ENCODE measurements at regions of chr10 and their contacts with region 1.

Region 1: GRCh38 chr10:99484603-99485581 is 47.9 kb upstream of the NKX2-3 start:
- DNase-seq: peak in 1 of 2 experiments; percentile 68
- H3K4me3 ChIP-seq: no peak overlapping the region
- H3K27ac ChIP-seq: no peak overlapping the region
- H3K4me1 ChIP-seq: no peaks in the 10 kb centered on the region
- H3K27me3 ChIP-seq: peaks cover 0 to 5% (median 0%) of the 10 kb centered on the region in 4 experiments; a peak in 2 of 7 replicates
- CTCF ChIP-seq: peak; percentile 47 to 69 (median 53); a peak in 3 of 4 replicates
- EP300 ChIP-seq: no peak
- POLR2A ChIP-seq: no peak
- RAD21 ChIP-seq: peak; percentile 65 to 71

Region 2: GRCh38 chr10:99435986-99436638 is 48.8 kb before region 1 on chr10:
- CTCF ChIA-PET with region 1: interaction called, 26 read pairs
- POLR2A ChIA-PET with region 1: no interaction called
- DNase-seq: no peak
- H3K4me3 ChIP-seq: no peak overlapping the region
- H3K27ac ChIP-seq: no peak overlapping the region
- H3K4me1 ChIP-seq: no peaks in the 10 kb centered on the region
- H3K27me3 ChIP-seq: no peaks in the 10 kb centered on the region
- CTCF ChIP-seq: peak in 2 of 3 experiments; percentile 38 to 40; a peak in 2 of 4 replicates
- EP300 ChIP-seq: no peak
- POLR2A ChIP-seq: no peak
- RAD21 ChIP-seq: peak; percentile 67 to 70

Region 3: DNA sequence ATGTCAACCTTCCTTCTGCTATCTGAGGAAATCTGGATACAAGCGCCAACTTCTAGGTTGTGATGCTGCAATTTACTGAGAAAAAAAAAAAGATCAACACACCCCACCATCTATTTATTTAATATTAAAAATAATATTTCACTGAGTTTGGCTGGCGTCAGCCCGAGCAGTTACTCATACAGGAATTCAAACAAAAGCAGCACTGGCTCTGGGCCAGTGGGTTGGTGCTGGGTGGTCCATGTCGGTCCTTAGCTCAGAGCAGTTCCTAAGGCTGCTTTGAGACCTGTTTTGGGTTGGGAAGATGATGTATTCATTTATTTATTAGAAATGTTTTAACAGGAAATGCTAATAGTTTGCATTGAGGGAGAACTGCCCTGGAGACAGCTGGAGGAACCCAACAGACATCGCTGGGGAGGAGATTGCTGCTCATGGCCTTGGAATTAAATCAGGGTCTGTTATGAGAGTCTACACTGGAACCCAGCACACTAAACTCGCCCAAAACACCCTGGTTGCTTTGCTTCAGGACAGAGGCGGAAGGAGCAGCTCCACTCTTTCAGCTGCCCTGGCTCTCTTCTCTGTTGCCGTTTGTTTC is 18.2 kb before region 1 on chr10:
- CTCF ChIA-PET with region 1: interaction called, 18 read pairs
- POLR2A ChIA-PET with region 1: no interaction called
- DNase-seq: no peak
- H3K4me3 ChIP-seq: no peak overlapping the region
- H3K27ac ChIP-seq: no peak overlapping the region
- H3K4me1 ChIP-seq: no peaks in the 10 kb centered on the region
- H3K27me3 ChIP-seq: no peaks in the 10 kb centered on the region
- CTCF ChIP-seq: no peak
- EP300 ChIP-seq: no peak
- POLR2A ChIP-seq: no peak
- RAD21 ChIP-seq: no peak

Region 4: GRCh38 chr10:99548041-99548530 is 63.2 kb after region 1 on chr10:
- CTCF ChIA-PET with region 1: interaction called, 74 read pairs
- POLR2A ChIA-PET with region 1: no interaction called
- DNase-seq: no peak
- H3K4me3 ChIP-seq: no peak overlapping the region
- H3K27ac ChIP-seq: no peak overlapping the region
- H3K4me1 ChIP-seq: no peaks in the 10 kb centered on the region; a peak in 1 of 7 replicates
- H3K27me3 ChIP-seq: peaks cover 4 to 33% (median 21%) of the 10 kb centered on the region in 4 experiments
- CTCF ChIP-seq: peak; percentile 62 to 82 (median 78)
- EP300 ChIP-seq: no peak
- POLR2A ChIP-seq: no peak
- RAD21 ChIP-seq: peak; percentile 67 to 77

Region 5: GRCh38 chr10:99579616-99580370 is 94.9 kb after region 1 on chr10:
- CTCF ChIA-PET with region 1: interaction called, 10 read pairs
- POLR2A ChIA-PET with region 1: no interaction called
- DNase-seq: no peak
- H3K4me3 ChIP-seq: no peak overlapping the region
- H3K27ac ChIP-seq: no peak overlapping the region
- H3K4me1 ChIP-seq: peaks cover 0 to 3% (median 0%) of the 10 kb centered on the region in 4 experiments; a peak in 1 of 7 replicates
- H3K27me3 ChIP-seq: no peaks in the 10 kb centered on the region; a peak in 3 of 7 replicates
- CTCF ChIP-seq: no peak
- EP300 ChIP-seq: no peak
- POLR2A ChIP-seq: no peak
- RAD21 ChIP-seq: no peak

Region 6: GRCh38 chr10:99612167-99612831 is 127.4 kb after region 1 on chr10:
- CTCF ChIA-PET with region 1: interaction called, 21 read pairs
- POLR2A ChIA-PET with region 1: no interaction called
- DNase-seq: no peak
- H3K4me3 ChIP-seq: no peak overlapping the region
- H3K27ac ChIP-seq: no peak overlapping the region; the same call in 1 of the 2 replicates
- H3K4me1 ChIP-seq: no peaks in the 10 kb centered on the region
- H3K27me3 ChIP-seq: no peaks in the 10 kb centered on the region
- CTCF ChIP-seq: peak in 2 of 3 experiments; percentile 83 to 89; a peak in 3 of 4 replicates
- EP300 ChIP-seq: no peak
- POLR2A ChIP-seq: no peak
- RAD21 ChIP-seq: peak; percentile 95 to 96

Region 7: DNA sequence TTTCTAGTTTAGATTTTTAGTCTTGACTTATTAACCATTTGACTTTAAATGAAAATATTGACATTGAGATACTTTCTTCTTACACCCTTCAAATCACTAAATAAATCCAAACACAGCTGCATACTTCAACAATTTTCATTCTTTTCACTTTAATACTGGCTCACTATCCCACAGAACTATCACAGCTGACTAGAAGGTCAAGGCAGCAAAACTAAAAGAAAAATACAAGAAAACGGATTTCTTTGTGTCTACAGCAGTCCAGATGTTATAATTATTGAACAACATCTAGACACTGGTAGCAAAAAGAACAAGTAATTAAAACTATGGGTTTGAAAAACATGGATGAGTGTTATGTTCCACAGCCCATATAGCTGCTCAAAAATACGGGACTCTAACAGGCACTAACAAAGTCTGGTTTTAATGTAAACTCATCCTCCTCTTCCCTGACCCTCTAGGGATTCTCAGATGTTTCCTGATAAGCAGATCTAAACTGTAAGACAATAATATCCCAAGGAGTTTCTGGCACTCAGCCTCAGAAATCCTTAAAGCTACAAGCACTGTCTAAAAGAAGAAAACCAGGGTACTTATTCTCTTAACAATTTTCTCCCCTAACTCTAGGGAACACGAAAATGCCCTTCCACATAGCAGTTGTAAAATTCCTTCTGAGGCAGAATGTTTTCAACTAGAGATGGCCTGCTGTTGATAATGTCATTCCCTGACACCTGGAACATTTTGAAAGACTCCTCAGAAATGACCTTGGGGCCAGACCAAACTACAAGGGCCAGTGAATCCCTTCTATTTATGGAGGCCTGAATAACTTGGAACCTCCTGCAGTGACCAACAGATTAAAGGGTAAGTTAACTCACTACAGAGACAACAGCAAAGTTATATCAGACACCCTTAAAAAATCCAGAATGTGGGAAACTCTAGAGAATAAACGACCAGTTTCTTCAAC is 512.1 kb after region 1 on chr10:
- CTCF ChIA-PET with region 1: no interaction called
- POLR2A ChIA-PET with region 1: no interaction called
- DNase-seq: no peak
- H3K4me3 ChIP-seq: no peak overlapping the region
- H3K27ac ChIP-seq: no peak overlapping the region
- H3K4me1 ChIP-seq: peaks cover 3 to 5% (median 4%) of the 10 kb centered on the region in 4 experiments; a peak in 4 of 7 replicates
- H3K27me3 ChIP-seq: no peaks in the 10 kb centered on the region
- CTCF ChIP-seq: no peak
- EP300 ChIP-seq: no peak
- POLR2A ChIP-seq: no peak
- RAD21 ChIP-seq: no peak